Colonic mucosa (tissue), 4 donors: ENCODE measurements at regions of chr5 and their contacts with region 1.

Region 1: DNA sequence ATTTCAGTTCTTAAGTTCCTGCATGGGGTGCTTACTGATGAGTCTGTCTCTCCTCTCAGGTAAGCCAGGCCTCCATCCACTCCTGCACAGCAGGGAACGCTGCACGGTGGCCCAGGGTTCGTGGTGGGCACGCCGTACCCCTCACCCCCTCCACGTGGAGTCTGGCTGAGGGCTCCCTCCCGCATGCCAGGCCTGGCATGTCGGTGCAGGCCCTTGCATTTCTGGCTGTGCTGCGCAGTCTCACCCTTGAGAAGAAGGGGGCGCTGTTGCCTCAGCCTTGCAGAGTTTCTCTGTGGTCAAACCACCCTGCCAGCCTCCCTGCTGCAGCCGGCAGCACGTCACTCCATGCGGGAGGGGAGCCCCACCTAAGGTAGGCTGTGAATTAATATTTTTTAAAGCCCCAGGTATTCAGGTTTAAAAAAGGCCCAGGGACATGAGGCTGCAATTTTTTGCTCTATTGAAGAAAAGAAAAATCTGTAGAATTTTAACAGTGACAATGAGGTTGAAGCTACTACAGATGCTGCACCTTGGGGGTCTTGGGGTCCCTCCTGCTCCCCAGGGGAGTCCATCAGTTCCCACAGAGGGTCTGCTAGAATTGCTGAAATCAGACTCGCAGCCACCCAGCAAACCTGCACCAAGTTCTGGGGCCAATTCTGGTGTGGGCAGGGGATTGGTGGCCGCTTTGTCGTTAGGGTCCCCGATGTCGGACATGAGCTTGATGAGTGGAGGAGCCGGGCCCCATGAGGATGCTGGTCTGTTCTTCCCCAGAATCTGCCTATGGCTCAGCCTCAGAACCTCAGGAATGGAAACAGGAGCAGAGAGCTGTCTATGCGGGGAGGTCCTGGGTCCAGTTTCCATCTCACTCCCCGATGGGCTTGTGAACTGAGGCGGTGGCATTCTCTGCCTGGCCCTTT is 52.6 kb downstream of the TENT4A start:
- DNase-seq: peak; percentile 89
- H3K4me3 ChIP-seq: peak overlapping the region; percentile 4
- H3K27ac ChIP-seq: peak overlapping the region; percentile 74
- H3K4me1 ChIP-seq: peaks cover 7% of the 10 kb centered on the region
- H3K27me3 ChIP-seq: no peaks in the 10 kb centered on the region
- CTCF ChIP-seq: peak; percentile 85

Region 2: DNA sequence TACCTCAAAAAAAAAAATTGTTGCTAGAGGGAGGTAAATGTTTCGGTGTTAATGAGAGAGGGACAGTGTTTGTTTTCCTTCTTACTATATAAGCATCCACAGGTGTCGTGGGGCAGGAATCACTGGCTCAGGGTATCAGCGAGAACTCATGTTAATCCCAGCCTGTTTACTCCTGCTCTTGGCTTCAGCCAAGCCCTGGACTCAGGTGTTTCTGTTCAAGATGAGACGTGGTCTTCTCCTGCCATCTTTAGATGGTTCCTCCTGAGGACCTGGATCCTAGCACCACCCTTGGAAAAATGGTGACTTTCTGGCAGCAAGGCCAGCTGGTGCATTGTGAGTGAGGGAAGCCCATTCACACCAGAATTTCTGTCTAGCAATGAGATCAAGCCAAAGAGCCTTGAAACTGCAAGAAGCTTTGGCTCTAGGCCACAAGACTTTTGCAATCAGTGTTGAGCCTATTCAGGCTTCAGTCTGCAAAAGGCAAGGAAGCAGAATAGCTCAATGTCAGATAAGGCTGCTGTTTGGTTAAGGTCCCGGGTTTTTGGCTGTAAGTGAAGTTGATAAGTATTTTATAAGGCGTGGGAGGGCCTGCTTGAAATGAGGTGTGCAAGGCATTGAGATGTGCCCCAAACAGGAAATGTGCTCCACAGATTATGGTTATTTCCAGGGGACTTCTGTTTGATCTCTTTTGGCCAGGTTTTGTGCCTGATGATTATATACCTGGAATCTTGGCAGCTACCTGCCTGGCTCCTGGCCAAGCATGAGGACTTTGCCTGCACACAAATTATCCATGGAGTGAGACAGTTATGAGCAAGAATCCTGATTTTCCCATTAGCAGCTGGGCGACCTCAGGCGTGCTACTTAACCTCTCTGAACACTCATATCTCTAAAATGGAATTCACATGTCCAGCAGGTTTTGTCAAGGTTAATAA is 47.2 kb after region 1 on chr5:
- intact Hi-C with region 1: loop called (anchors 5 kb)
- DNase-seq: peak; percentile 85
- H3K4me3 ChIP-seq: no peak overlapping the region
- H3K27ac ChIP-seq: no peak overlapping the region
- H3K4me1 ChIP-seq: no peaks in the 10 kb centered on the region
- H3K27me3 ChIP-seq: no peaks in the 10 kb centered on the region
- CTCF ChIP-seq: no peak

Region 3: GRCh38 chr5:6900247-6901227 is 134.7 kb after region 1 on chr5:
- intact Hi-C with region 1: no loop called
- DNase-seq: peak; percentile 47
- H3K4me3 ChIP-seq: no peak overlapping the region
- H3K27ac ChIP-seq: no peak overlapping the region
- H3K4me1 ChIP-seq: no peaks in the 10 kb centered on the region
- H3K27me3 ChIP-seq: no peaks in the 10 kb centered on the region
- CTCF ChIP-seq: no peak

Region 4: GRCh38 chr5:7592910-7593309 is 827.0 kb after region 1 on chr5:
- intact Hi-C with region 1: loop called (anchors 10 kb)
- DNase-seq: no peak
- H3K4me3 ChIP-seq: no peak overlapping the region
- H3K27ac ChIP-seq: no peak overlapping the region
- H3K4me1 ChIP-seq: no peaks in the 10 kb centered on the region
- H3K27me3 ChIP-seq: no peaks in the 10 kb centered on the region
- CTCF ChIP-seq: no peak